Ascending aorta (tissue), 2 donors: ENCODE measurements at regions of chr7 and their contacts with region 1.

Region 1: GRCh38 chr7:83655951-83656556 is 7.1 kb upstream of the SEMA3E start:
- DNase-seq: no peak
- H3K4me3 ChIP-seq: no peak overlapping the region
- H3K27ac ChIP-seq: no peak overlapping the region
- H3K4me1 ChIP-seq: no peaks in the 10 kb centered on the region
- H3K27me3 ChIP-seq: no peaks in the 10 kb centered on the region
- CTCF ChIP-seq: peak; percentile 29 to 55 (median 47)

Region 2: GRCh38 chr7:82810558-82811259 is 845.3 kb before region 1 on chr7:
- intact Hi-C with region 1: loop called (anchors 5 kb)
- DNase-seq: no peak
- H3K4me3 ChIP-seq: no peak overlapping the region
- H3K27ac ChIP-seq: no peak overlapping the region
- H3K4me1 ChIP-seq: no peaks in the 10 kb centered on the region
- H3K27me3 ChIP-seq: no peaks in the 10 kb centered on the region
- CTCF ChIP-seq: peak in 2 of 3 experiments; percentile 40 to 53

Region 3: DNA sequence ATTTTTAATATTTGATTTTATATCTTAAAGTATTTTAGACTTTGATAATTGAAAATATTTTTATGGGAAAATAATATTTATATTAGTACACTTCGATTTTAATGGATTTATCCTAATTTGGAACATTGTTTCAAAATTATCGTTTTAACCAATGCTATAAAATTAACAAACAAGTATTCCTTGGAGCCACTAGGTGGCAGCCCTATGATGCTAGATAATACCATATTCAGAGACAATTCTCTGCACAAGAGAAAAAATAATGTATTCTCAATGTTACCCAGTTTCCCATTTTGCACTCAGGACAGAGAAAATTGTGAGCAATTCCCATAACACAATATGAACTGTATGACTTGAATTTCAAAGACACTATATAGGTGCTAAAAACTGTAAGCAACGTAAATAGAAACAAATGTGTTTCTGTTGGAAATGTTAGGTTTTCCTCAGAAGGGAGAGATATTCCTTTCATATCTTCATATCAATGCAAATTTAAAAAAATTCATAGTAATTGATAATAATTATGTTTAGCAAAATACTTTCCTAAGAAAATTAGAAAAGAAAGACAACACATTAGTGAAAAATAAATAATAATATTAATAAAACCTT is 245.0 kb before region 1 on chr7:
- intact Hi-C with region 1: loop called (anchors 2 kb)
- DNase-seq: no peak
- H3K4me3 ChIP-seq: no peak overlapping the region
- H3K27ac ChIP-seq: no peak overlapping the region
- H3K4me1 ChIP-seq: no peaks in the 10 kb centered on the region
- H3K27me3 ChIP-seq: no peaks in the 10 kb centered on the region
- CTCF ChIP-seq: peak in 2 of 3 experiments; percentile 48 to 57